ENCODE measurements at regions of chr6 and their contacts with region 1.

Region 1: DNA sequence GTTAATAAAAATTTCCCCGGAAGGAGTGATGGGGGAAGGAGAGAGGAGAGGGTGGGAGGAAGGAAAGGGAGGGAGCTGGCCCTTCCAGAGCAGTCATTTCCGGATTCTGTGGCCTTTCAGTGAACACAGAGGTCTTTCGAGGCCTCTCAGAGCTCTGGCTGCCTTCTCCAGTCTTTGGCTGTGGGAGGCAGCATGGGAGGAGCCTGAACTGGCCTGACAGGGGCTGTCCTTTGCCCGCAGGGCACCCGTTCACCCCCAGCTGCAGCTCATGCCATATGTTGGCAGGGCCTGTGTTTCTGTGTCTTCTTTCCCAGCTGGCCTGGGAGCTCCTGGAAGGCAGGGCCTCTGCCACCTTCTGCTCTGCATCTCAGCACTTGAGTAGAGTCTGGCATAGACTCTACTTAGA is 95.5 kb downstream of the PPP1R14C start:
- DNase-seq: no peak
- ATAC-seq: no peak
- H3K4me3 ChIP-seq: no peak overlapping the region
- H3K4me3 Mint-ChIP-seq: no peak overlapping the region
- H3K27ac ChIP-seq: no peak overlapping the region
- H3K27ac Mint-ChIP-seq: no peak overlapping the region
- H3K4me1 ChIP-seq: peaks cover 21% of the 10 kb centered on the region
- H3K4me1 Mint-ChIP-seq: peaks cover 12% of the 10 kb centered on the region
- H3K27me3 ChIP-seq: no peaks in the 10 kb centered on the region
- H3K27me3 Mint-ChIP-seq: no peaks in the 10 kb centered on the region
- CTCF ChIP-seq: no peak

Region 2: GRCh38 chr6:149182262-149182661 is 1056.1 kb before region 1 on chr6:
- CTCF ChIA-PET with region 1: no interaction called
- POLR2A ChIA-PET with region 1: no interaction called
- intact Hi-C with region 1: loop called in 1 of 2 experiments (anchors 10 kb)
- DNase-seq: peak in 2 of 14 experiments; percentile 23 to 26
- ATAC-seq: no peak
- H3K4me3 ChIP-seq: no peak overlapping the region
- H3K4me3 Mint-ChIP-seq: no peak overlapping the region
- H3K27ac ChIP-seq: no peak overlapping the region
- H3K27ac Mint-ChIP-seq: no peak overlapping the region
- H3K4me1 ChIP-seq: no peaks in the 10 kb centered on the region
- H3K4me1 Mint-ChIP-seq: no peaks in the 10 kb centered on the region
- H3K27me3 ChIP-seq: no peaks in the 10 kb centered on the region
- H3K27me3 Mint-ChIP-seq: no peaks in the 10 kb centered on the region
- CTCF ChIP-seq: no peak

Region 3: GRCh38 chr6:150046943-150047342 is 191.4 kb before region 1 on chr6:
- CTCF ChIA-PET with region 1: no interaction called
- POLR2A ChIA-PET with region 1: no interaction called
- intact Hi-C with region 1: no loop called
- DNase-seq: peak in 1 of 14 experiments; percentile 2
- ATAC-seq: no peak
- H3K4me3 ChIP-seq: no peak overlapping the region
- H3K4me3 Mint-ChIP-seq: no peak overlapping the region
- H3K27ac ChIP-seq: no peak overlapping the region
- H3K27ac Mint-ChIP-seq: no peak overlapping the region
- H3K4me1 ChIP-seq: no peaks in the 10 kb centered on the region
- H3K4me1 Mint-ChIP-seq: peaks cover 6% of the 10 kb centered on the region
- H3K27me3 ChIP-seq: peaks cover 17 to 22% of the 10 kb centered on the region in 2 experiments
- H3K27me3 Mint-ChIP-seq: peaks cover 71% of the 10 kb centered on the region
- CTCF ChIP-seq: no peak

Measured in CD4-positive, alpha-beta T cell (primary cell).